ENCODE measurements at regions of chr2 and their contacts with region 1.

Region 1: DNA sequence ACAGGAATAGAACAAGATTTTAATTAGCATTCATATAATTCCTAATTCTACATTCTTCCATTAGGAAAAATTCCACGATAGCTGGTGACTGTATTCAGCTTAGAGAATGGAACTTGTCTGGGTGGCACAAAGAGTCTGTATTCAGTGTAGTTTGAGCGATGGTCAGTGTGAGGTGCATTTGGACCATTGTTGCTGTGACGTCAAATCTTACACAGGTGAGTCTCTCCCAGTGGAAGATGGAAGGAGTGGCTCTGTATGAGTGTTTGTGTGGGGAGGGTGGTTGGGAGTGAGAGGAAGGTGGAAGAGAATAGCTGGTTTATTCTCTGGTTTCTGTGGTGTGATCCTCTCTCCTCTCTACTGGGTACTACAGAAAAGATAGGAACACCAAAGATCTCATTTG is 1038.6 kb downstream of the CNTNAP5 start:
- DNase-seq: no peak
- H3K4me3 ChIP-seq: no peak overlapping the region
- H3K27ac ChIP-seq: no peak overlapping the region
- H3K4me1 ChIP-seq: no peaks in the 10 kb centered on the region
- H3K27me3 ChIP-seq: no peaks in the 10 kb centered on the region
- CTCF ChIP-seq: no peak
- EP300 ChIP-seq: no peak
- POLR2A ChIP-seq: no peak

Region 2: GRCh38 chr2:124589971-124590370 is 473.7 kb before region 1 on chr2:
- in situ Hi-C with region 1: no loop called
- intact Hi-C with region 1: loop called (anchors 5 kb)
- DNase-seq: no peak
- H3K4me3 ChIP-seq: no peak overlapping the region
- H3K27ac ChIP-seq: no peak overlapping the region
- H3K4me1 ChIP-seq: peaks cover 0 to 7% (median 0%) of the 10 kb centered on the region in 4 donors
- H3K27me3 ChIP-seq: no peaks in the 10 kb centered on the region
- CTCF ChIP-seq: no peak
- EP300 ChIP-seq: no peak
- POLR2A ChIP-seq: no peak